Right ventricle myocardium inferior (tissue), 1 donor: ENCODE measurements at regions of chr6 and their contacts with region 1.

Region 1: DNA sequence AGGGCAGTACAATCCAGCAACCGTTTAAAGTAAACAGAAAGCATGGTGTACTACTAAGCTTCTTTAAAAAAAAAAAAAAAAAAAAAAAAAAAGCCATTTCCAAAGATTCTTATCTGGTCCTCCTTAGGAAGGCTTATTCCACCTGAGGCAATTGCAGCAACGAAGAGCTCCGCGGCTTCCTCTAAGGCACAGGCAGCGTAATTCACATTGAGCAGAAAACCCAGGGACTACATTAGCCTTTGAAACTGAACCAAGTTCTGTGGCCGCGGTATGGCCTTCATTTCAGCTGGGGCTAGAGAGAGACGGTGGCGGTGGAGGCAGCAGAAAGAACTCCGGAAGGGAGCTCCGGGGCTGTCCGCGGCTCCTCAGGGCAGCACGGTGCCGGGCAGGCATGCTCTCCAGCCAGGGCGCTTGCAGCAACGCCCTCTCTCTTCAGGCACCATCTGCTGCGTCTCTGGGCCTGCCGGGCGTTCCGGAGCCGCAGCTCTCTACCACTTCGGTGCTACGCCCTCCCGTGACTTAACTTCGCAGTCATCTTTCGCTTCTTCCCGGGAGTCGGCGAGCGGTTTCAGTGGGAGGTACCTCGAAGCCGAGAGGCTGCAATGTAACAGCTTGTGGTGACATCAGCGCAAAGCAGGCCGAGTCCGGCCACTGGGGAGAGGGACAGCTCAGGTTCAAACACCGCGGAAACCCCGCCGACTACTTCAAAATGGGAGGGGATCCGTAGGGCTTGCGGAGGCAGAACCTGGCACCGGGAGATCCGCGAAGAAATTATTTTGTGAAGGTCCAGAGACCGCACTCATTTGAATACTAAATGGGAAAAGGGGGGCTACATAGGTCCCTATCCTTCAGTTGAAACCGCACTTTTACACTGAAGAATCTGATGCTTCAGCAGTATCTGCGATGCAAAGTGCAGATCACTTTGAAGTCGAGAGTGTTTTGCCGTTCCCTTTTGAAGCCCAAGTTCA is 100.0 kb downstream of the DST start:
- DNase-seq: peak; percentile 94
- ATAC-seq: peak; percentile 98

Region 2: GRCh38 chr6:56364827-56365313 is 177.8 kb before region 1 on chr6:
- intact Hi-C with region 1: loop called (anchors 5 kb)
- DNase-seq: no peak
- ATAC-seq: no peak

Region 3: DNA sequence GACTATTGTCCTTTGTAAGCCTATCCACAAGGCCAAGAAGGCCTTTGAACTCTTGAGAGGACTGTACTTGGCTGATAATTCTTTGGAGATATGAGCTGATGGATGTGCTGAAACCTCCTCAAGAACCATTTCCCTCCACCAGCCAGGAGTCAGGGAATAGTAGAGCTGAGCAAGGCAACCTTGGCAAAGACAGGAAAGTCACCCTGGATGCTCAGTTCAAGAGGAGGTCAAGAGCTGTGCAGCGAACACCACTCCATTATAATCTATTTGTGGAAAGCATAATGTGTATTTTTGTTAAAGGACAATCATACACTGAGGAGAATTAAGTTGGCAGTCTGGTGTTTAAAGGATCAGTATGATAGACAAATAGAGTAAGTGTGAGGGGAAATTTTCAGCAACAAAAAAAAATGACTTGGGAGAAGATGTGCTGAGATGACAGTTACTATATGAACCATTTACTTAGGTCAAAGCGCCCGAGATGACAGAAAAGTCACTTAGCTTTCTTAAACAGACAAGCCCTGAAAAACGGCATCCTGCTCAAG is 118.0 kb before region 1 on chr6:
- intact Hi-C with region 1: no loop called
- DNase-seq: no peak
- ATAC-seq: peak; percentile 87

Region 4: DNA sequence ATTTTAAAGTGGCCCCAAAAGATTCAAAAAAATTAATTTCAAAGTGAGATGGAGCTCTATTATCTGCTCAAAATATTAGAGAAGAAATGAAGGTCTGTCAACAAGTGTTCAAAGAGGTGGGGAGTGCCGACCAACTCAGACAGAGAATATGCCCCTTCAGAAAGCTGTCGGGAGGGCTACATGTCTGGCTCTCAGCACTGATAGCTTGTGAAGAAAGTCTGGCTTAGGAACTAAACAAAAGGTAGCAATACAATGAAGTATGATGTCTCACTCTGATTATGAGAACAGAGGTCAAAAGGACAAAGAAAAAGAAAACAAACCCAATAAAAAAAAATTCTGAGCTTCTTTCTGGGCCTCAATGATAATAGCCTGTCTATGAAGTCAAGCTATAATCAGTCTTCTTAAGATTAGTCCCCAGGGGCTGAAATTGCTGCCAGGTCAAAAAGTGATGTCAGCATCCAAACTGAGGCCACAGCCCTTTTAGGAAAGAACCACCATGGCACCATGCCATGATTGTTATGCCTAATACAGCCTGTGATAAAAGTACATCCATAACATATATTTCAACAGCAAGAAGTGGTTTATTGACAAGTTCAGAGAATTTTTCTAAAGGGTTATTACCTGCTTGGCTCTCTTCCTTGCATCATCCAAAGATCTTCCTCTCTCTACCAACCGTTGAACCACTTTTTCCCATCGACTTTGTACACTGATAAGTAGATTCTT is 50.9 kb before region 1 on chr6:
- intact Hi-C with region 1: loop called (anchors 5 kb)
- DNase-seq: no peak
- ATAC-seq: peak; percentile 57

Region 5: GRCh38 chr6:56507517-56507916 is 35.1 kb before region 1 on chr6:
- intact Hi-C with region 1: loop called (anchors 5 kb)
- DNase-seq: no peak
- ATAC-seq: peak; percentile 78